PC-9 (cell line): ENCODE measurements at regions of chr17 and their contacts with region 1.

Region 1: GRCh38 chr17:66987059-66987616 is 22.6 kb downstream of the CACNG4 start:
- DNase-seq: no peak
- H3K4me3 ChIP-seq: no peak overlapping the region
- H3K27ac ChIP-seq: no peak overlapping the region
- H3K4me1 ChIP-seq: no peaks in the 10 kb centered on the region
- H3K27me3 ChIP-seq: no peaks in the 10 kb centered on the region
- CTCF ChIP-seq: no peak

Region 2: GRCh38 chr17:66149562-66149961 is 837.6 kb before region 1 on chr17:
- CTCF ChIA-PET with region 1: no interaction called
- POLR2A ChIA-PET with region 1: interaction called, 14 read pairs
- intact Hi-C with region 1: no loop called
- DNase-seq: no peak
- H3K4me3 ChIP-seq: no peak overlapping the region
- H3K27ac ChIP-seq: no peak overlapping the region
- H3K4me1 ChIP-seq: no peaks in the 10 kb centered on the region
- H3K27me3 ChIP-seq: no peaks in the 10 kb centered on the region
- CTCF ChIP-seq: no peak

Region 3: DNA sequence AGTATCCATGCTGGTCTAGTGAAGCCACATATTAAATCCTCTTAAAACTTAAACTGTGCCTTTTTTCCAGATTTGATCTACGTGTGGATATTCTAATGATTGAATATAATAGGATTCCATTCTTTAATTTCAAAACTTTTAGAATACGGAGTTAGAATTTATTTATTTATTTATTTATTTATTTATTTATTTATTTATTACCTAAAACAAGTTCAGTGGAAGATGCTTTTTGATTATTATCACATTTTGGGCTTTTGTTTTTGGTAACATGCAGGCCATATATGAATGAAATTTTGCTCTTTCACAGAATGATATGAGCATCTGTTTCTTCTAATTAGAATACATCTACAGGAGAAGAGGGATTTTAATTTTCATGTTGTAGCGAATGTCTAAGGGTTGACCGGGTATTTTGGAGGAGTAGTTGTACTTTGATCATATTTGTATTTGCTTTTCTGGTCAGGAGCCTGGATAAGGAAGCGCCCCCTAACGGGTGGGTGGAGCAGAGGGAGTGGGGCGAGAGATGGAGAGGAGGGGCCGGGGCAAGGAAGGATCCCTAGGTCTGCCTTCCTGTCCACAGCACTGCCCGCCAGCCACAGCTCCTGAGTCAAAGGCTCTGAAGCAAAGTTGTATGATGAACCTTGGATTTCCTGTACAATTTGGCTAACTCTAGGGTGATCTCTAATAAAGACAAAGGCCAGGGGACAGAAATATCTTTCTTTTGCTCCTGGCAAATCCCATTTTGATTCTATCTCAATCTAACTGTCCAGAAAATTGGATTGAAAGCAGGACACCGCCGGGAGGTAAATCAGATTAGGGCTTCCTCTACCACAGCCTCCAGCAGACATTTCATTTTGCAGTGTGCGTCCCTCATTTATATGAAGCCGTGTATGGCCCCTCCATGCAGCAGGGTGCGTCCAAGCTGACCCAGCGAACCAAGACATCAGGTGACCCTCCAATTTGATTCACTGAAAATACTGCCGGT is 535.7 kb before region 1 on chr17:
- CTCF ChIA-PET with region 1: no interaction called
- POLR2A ChIA-PET with region 1: no interaction called
- intact Hi-C with region 1: no loop called
- DNase-seq: no peak
- H3K4me3 ChIP-seq: no peak overlapping the region
- H3K27ac ChIP-seq: no peak overlapping the region
- H3K4me1 ChIP-seq: no peaks in the 10 kb centered on the region
- H3K27me3 ChIP-seq: no peaks in the 10 kb centered on the region
- CTCF ChIP-seq: no peak

Region 4: DNA sequence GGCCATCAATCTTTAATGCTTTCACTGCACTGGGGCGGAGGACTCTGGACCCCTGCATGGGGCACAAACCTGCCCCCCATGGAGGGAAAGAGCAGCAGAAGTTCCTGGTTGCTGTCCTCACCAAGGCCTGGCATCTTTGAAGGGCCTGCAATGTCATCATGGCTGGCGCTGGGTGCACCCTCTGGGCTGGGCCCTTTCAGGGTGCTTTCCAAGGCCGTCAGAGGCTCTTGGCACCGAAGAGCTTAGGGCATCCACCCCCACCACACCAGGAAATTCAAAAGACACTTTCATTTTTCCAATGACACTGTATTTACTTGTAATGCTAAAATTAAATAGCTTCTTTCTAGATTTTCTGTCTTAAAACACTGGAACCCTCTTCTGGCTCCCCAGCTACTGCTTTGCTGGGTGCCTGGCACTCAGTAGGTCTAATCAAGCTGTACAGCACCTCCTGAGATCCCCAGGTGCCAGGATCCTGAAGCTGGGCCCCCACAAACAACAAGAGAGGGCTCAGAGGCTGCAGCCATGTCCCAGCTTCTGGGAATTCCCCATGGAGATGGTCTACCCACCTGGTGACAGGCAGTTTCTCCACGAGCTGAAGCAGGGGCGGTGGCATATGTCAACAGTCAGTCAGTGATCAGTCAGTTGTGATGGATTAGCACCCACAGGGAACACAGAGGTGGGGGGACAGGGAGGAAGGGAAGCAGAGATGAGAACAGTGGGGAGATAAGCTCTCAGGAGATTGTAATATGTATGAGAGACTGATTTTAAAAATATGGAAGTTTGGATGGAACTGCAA is 55.2 kb after region 1 on chr17:
- CTCF ChIA-PET with region 1: no interaction called
- POLR2A ChIA-PET with region 1: no interaction called
- intact Hi-C with region 1: no loop called
- DNase-seq: no peak
- H3K4me3 ChIP-seq: no peak overlapping the region
- H3K27ac ChIP-seq: no peak overlapping the region
- H3K4me1 ChIP-seq: no peaks in the 10 kb centered on the region
- H3K27me3 ChIP-seq: no peaks in the 10 kb centered on the region
- CTCF ChIP-seq: no peak